ENCODE measurements at regions of chr3 and their contacts with region 1.

Region 1: DNA sequence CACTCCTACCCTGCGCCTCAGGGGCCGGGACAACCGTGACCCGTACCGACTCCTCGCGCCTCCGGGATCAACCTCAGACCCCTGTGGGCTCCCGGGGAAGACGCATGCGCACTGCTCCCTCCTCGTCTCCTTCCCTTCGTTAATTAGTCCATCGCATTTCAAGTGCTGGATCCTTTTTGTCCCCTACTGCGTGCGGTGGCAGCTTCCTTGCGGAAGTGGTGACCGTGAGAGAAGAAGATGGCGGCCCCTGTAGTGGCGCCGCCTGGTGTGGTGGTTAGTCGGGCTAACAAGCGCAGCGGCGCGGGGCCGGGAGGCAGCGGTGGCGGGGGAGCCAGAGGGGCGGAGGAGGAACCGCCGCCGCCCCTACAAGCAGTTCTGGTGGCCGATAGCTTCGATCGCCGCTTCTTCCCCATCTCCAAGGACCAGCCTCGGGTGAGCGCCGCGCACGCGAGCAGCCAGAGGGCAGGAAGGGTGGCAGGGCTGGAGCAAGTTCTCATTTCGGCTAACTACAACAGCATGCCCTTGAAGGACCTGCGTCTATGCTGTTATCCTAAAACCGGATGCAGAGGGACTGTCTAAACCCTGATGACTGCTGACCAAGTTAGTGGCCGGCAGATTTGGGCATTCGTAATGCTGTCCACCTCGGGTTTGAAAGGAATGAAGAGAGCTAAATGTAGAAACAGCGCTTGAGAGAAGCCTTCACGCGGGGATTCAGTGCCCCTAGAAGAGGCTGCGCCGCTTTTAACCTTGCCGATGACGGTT is at the start of gene EIF2B5:
- DNase-seq: peak; percentile 94
- H3K4me3 Mint-ChIP-seq: peak within 1 kb of the TSS; percentile 96
- H3K27ac Mint-ChIP-seq: peak within 1 kb of the TSS; percentile 91
- H3K4me1 Mint-ChIP-seq: peaks cover 35% of the 10 kb centered on the region
- H3K27me3 Mint-ChIP-seq: no peaks in the 10 kb centered on the region
- total RNA-seq, gene EIF2B5: 49.6 to 51.5 TPM

Region 2: DNA sequence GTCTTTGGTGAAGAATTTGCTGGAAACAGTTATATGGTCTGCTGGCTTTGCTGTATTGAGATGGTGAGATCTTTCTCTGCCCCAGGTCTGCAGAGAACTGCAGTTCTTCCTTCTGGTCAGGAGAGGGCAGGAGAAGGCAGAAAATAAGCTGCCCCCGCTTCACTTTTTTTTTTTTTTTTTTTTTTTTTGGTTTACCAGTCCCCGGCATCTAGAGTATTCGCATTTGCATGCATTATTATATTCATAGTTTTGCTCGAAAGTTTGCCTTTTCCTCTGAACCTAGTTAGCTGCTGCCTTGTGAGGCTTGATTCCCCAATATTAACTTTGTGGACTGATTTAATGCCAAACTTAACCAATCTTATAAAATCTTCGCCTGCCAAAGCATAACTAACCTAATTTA is 240.0 kb before region 1 on chr3:
- CTCF ChIA-PET with region 1: interaction called, 4 read pairs
- POLR2A ChIA-PET with region 1: interaction called, 3 read pairs
- intact Hi-C with region 1: loop called (anchors 1 kb)
- DNase-seq: peak; percentile 41
- H3K4me3 Mint-ChIP-seq: no peak overlapping the region
- H3K27ac Mint-ChIP-seq: no peak overlapping the region
- H3K4me1 Mint-ChIP-seq: no peaks in the 10 kb centered on the region
- H3K27me3 Mint-ChIP-seq: peaks cover 15% of the 10 kb centered on the region

Region 3: GRCh38 chr3:184154885-184155643 is 19.7 kb after region 1 on chr3 and contains the start of gene DVL3:
- CTCF ChIA-PET with region 1: interaction called, 6 read pairs
- POLR2A ChIA-PET with region 1: interaction called, 7 read pairs
- intact Hi-C with region 1: loop called (anchors 1 kb)
- DNase-seq: peak; percentile 57
- H3K4me3 Mint-ChIP-seq: peak within 1 kb of the TSS; percentile 95
- H3K27ac Mint-ChIP-seq: peak within 1 kb of the TSS; percentile 60
- H3K4me1 Mint-ChIP-seq: peaks cover 18% of the 10 kb centered on the region
- H3K27me3 Mint-ChIP-seq: no peaks in the 10 kb centered on the region
- total RNA-seq, gene DVL3: 28.5 to 32.4 TPM

Region 4: DNA sequence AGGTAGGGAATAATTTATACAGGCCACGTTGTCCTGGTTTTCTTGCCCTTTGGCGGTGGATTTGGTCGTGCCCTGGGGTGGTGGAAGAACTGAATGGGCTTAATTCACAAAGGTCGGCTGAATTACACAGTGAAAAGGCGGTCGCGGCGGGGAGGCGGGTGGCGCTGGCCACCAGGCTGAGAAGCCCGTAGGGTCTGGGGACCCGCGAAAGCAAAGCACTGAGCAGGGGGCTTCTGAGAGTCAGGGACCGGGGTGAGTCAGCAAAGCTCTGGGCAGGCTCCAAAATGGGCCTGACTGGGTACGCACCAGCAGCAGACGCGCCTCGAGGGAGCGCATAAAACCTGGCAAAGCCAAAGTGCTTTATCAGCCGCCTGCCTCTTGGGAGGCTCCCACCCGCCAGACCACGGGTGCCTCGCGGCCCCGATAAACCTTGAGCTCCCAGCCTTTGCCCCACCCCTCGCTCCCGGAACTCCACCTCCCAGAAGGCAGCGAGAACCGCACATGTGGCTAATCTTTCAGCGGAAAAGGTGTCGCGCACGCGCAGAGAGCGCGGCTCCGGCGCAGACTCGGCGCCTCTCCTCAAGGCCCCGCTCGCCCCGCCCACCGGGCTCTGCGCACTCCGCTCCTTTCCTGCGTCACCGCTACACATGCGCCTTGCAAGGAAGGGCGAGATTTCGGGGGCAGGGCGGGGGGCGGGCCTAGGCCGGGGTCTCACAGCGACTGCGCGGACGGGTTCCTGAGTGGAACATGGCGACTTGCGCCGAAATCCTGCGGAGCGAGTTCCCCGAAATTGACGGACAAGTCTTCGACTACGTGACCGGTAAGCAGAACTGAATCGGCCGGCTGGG is 50.4 kb after region 1 on chr3 and contains the start of gene ABCF3:
- CTCF ChIA-PET with region 1: no interaction called
- POLR2A ChIA-PET with region 1: interaction called, 5 read pairs
- intact Hi-C with region 1: loop called (anchors 1 kb)
- DNase-seq: peak; percentile 99
- H3K4me3 Mint-ChIP-seq: peak within 1 kb of the TSS; percentile 96
- H3K27ac Mint-ChIP-seq: peak within 1 kb of the TSS; percentile 92
- H3K4me1 Mint-ChIP-seq: peaks cover 29% of the 10 kb centered on the region
- H3K27me3 Mint-ChIP-seq: no peaks in the 10 kb centered on the region
- total RNA-seq, gene ABCF3: 41.2 to 48.7 TPM

Measured in activated CD4-positive, alpha-beta memory T cell treated with anti-CD3 and anti-CD28 coated beads for 36 hours (primary cell).